ENCODE measurements at regions of chr7 and their contacts with region 1.

Region 1: GRCh38 chr7:5248201-5248885 is 34.4 kb upstream of the SLC29A4 start:
- DNase-seq: no peak
- H3K4me3 ChIP-seq: no peak overlapping the region
- H3K27ac ChIP-seq: no peak overlapping the region
- H3K4me1 ChIP-seq: no peaks in the 10 kb centered on the region
- H3K27me3 ChIP-seq: no peaks in the 10 kb centered on the region
- CTCF ChIP-seq: no peak

Region 2: GRCh38 chr7:5320802-5321396 is 72.6 kb after region 1 on chr7:
- CTCF ChIA-PET with region 1: no interaction called
- dilution Hi-C with region 1: no loop called
- in situ Hi-C with region 1: no loop called
- intact Hi-C with region 1: loop called (anchors 10 kb)
- DNase-seq: no peak
- H3K4me3 ChIP-seq: no peak overlapping the region
- H3K27ac ChIP-seq: no peak overlapping the region
- H3K4me1 ChIP-seq: no peaks in the 10 kb centered on the region
- H3K27me3 ChIP-seq: no peaks in the 10 kb centered on the region
- CTCF ChIP-seq: no peak

Region 3: DNA sequence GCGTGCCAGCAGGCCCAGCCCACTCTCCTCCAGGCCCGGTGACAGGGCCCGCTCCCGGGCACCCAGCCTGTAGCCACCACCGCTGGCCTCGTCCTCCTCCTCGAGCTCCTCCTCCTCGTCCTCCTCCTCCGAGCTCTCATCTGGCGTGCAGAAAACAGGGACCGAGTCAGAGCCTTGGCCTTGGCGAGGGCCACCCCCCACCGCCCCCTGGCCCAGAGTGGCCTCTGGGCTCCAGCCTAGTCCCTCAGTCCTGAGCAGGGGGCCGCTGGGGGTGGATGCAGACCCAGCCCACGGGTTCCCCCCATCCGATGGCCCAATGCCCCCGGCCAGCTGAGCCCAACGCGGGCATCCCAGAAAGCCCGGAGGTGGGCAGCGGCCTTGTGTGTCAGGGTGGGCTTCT is 97.3 kb after region 1 on chr7:
- CTCF ChIA-PET with region 1: no interaction called
- dilution Hi-C with region 1: no loop called
- in situ Hi-C with region 1: no loop called
- intact Hi-C with region 1: no loop called
- DNase-seq: no peak
- H3K4me3 ChIP-seq: no peak overlapping the region
- H3K27ac ChIP-seq: no peak overlapping the region
- H3K4me1 ChIP-seq: no peaks in the 10 kb centered on the region
- H3K27me3 ChIP-seq: no peaks in the 10 kb centered on the region
- CTCF ChIP-seq: no peak

Region 4: DNA sequence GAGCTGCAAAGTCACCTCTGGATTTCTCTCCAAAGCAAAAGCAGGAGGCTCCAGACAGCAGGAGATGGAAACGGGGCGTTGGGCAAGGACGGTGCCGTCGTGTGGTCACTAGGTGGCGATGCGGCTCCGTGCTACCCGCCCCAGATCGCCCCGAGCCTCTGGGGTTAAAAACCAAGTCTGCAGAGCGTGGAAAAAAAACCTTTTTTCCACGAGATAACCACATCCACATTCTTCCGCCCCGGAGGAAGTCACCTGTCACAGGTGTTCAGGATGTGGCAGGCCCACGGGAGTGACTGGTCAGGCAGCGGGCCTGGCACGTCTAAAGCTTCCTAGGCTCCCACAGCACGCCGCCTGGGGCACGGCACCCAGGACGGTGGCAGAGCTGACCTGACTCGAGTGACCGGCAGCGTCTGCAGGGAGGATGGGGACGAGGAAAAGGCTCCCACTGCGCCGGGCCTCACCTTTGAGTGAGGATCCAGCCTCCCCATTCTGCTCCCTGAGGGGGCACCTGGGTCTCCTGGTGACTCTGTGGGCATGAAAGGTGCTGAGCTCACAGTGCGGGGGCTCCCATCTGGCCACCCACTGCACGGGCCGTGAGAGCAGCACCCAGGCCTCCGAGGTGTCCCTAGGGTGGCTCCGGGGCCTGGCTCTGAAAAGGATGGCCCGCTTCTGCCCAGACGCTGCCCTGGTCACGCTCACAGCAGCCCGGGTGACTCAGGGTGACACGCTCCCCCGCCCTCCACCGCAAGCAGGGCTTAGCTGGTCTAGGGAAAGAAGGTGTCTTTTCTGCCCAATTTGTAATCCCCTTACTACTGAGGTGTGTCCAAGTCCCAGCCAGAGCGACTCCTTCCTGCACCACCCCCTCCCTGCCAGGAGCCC is 246.6 kb after region 1 on chr7:
- CTCF ChIA-PET with region 1: no interaction called
- dilution Hi-C with region 1: no loop called
- in situ Hi-C with region 1: no loop called
- intact Hi-C with region 1: no loop called
- DNase-seq: peak; percentile 76
- H3K4me3 ChIP-seq: peak overlapping the region in 2 of 3 experiments; percentile 15 to 23
- H3K27ac ChIP-seq: peak overlapping the region; percentile 16
- H3K4me1 ChIP-seq: peaks cover 21% of the 10 kb centered on the region
- H3K27me3 ChIP-seq: no peaks in the 10 kb centered on the region
- CTCF ChIP-seq: peak; percentile 91 to 96

Measured in mammary epithelial cell (primary cell).